ENCODE measurements at regions of chr11 and their contacts with region 1.

Region 1: DNA sequence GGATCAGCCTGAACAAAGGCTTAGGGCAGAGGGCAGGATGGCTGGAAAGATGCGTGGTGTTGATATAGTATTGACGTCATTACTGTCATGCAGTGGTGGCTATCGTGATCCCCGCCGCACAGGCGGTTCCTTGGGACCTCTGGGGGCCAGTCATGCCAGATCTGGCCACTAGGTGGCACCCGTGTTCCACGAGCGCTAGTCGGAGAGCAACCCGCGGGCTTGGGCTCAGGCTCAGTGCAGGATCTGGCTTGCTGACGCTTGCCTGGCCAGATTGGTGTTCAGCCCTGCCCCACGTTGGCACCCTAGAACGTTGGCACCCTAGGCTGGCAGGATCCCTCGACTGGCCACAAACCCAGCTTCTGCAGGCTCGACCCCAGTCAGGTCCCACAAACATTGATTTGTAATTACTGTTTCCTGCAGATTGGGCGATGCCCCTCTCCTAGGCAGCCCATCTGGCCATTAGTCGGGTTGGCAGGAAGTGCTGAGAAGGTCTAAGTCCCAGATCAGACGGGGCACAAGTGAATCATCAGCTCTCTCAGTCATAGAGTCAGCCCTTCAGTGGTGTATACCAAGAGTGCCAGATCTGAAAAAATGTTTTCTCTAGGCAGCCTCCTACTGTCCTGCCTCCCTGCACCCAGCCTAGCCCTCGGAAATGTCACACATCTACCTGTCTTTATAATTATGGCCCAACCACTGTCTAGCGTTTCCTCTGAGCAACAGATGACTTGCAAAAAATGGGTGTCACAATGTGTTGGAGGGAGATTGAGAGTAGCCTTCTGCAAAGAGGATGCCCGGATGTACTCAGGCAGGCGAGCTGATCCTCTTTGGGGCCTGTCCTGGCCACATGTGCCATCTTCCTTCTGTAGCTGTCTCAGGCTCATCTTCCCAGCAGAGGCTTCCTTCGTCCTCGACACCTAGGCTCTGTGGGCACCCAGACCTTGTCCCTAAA is 315.3 kb downstream of the TMEM135 start:
- DNase-seq: peak; percentile 79
- H3K4me3 Mint-ChIP-seq: no peak overlapping the region
- H3K27ac Mint-ChIP-seq: no peak overlapping the region
- H3K4me1 Mint-ChIP-seq: peaks cover 6% of the 10 kb centered on the region
- H3K27me3 Mint-ChIP-seq: no peaks in the 10 kb centered on the region
- CTCF ChIP-seq: peak; percentile 98

Region 2: DNA sequence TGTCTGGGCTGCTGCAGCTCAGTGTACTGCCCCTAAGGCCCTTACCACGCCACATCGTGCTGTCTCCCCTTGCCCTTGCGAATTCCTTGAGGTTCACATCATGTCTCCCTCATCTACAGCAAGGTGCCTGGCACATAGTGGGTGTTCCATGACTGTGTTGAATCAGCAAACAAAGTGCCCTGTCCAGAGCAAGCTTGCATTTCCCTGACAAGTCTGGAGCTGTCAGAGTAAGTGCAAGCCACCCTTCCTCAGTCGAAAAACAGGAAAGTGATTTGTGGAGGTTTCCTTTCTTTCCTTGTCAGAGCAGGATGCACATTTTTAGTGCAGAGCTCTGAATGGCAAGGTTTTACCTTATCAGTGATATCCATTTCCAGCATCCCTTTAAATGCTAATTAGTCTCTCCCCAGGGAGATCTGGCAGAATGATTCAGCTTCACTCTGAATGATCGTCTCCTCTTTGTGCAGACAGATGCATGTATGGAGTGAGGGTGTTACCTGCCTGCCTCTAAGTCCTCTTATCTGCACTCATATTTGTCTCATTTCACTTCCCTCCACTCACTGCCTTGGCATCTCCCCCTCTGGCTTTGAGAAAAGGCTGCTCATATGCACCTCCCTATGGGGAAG is 15.9 kb after region 1 on chr11:
- CTCF ChIA-PET with region 1: interaction called, 14 read pairs
- POLR2A ChIA-PET with region 1: no interaction called
- intact Hi-C with region 1: no loop called
- DNase-seq: no peak
- H3K4me3 Mint-ChIP-seq: no peak overlapping the region
- H3K27ac Mint-ChIP-seq: no peak overlapping the region
- H3K4me1 Mint-ChIP-seq: no peaks in the 10 kb centered on the region
- H3K27me3 Mint-ChIP-seq: no peaks in the 10 kb centered on the region
- CTCF ChIP-seq: no peak

Region 3: GRCh38 chr11:87421422-87421821 is 68.4 kb after region 1 on chr11:
- CTCF ChIA-PET with region 1: interaction called, 178 read pairs
- POLR2A ChIA-PET with region 1: no interaction called
- intact Hi-C with region 1: loop called (anchors 1 kb)
- DNase-seq: peak; percentile 79
- H3K4me3 Mint-ChIP-seq: no peak overlapping the region
- H3K27ac Mint-ChIP-seq: no peak overlapping the region
- H3K4me1 Mint-ChIP-seq: peaks cover 20% of the 10 kb centered on the region
- H3K27me3 Mint-ChIP-seq: no peaks in the 10 kb centered on the region
- CTCF ChIP-seq: peak; percentile 71

Region 4: GRCh38 chr11:87878373-87878779 is 525.3 kb after region 1 on chr11:
- CTCF ChIA-PET with region 1: interaction called, 8 read pairs
- POLR2A ChIA-PET with region 1: no interaction called
- intact Hi-C with region 1: loop called (anchors 10 kb)
- DNase-seq: peak; percentile 57
- H3K4me3 Mint-ChIP-seq: no peak overlapping the region
- H3K27ac Mint-ChIP-seq: no peak overlapping the region
- H3K4me1 Mint-ChIP-seq: peaks cover 6% of the 10 kb centered on the region
- H3K27me3 Mint-ChIP-seq: no peaks in the 10 kb centered on the region
- CTCF ChIP-seq: peak; percentile 56

Region 5: GRCh38 chr11:88886796-88887195 is 1533.8 kb after region 1 on chr11:
- CTCF ChIA-PET with region 1: interaction called, 10 read pairs
- POLR2A ChIA-PET with region 1: no interaction called
- intact Hi-C with region 1: loop called (anchors 2 kb)
- DNase-seq: peak; percentile 82
- H3K4me3 Mint-ChIP-seq: no peak overlapping the region
- H3K27ac Mint-ChIP-seq: no peak overlapping the region
- H3K4me1 Mint-ChIP-seq: no peaks in the 10 kb centered on the region
- H3K27me3 Mint-ChIP-seq: no peaks in the 10 kb centered on the region
- CTCF ChIP-seq: peak; percentile 70